HCT116 (cell line): ENCODE measurements at regions of chr11 and their contacts with region 1.

Region 1: DNA sequence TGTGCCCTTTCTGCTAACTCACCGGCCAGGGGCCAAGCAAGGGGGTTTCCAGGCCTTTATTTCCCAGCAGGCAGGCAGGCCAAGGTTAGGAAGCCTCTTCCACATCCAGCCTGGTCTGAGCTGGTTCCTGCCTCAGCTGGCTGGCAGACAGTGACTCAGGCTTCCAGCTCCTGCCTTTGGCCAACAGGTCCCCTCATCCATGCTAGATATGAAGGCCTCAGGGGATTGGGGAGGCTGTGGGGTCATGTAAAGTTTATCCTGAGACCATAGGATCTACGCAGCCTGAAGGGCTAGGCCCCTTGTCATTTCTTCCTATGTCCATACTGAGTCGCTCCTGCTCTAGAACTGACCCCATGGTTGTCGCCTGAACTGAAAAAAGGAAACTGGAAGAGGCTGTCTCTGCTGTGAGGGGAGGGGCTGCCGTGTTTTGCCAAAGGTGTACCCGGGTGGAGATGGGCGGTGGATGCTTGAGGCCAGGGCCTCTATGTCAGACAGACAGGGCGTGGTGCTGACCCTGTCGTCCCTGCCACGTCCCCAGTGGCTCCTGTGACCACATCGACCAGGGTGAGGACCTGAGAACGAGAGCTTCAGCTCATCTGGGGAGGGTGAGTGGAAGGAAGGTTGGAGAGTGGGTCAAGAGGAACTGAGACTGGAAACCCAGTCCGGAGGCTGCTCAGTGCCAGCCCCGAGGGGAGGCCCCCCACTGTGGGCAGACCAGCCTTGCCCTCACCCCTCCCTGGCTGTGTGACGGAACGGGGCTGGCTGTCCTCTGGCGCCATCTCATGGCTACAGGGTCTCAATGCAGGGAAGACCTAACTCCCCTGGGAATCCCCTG is 17.0 kb downstream of the P2RY6 start:
- DNase-seq: peak; percentile 53
- ATAC-seq: peak; percentile 92
- H3K4me3 ChIP-seq: peak overlapping the region in 1 of 2 experiments; percentile 2; a peak in 1 of 4 replicates
- H3K27ac ChIP-seq: no peak overlapping the region; the same call in 1 of the 2 replicates
- H3K4me1 ChIP-seq: peaks cover 4 to 11% of the 10 kb centered on the region in 2 experiments; a peak in 2 of 4 replicates
- H3K27me3 ChIP-seq: no peaks in the 10 kb centered on the region; the same call in 1 of the 2 replicates
- CTCF ChIP-seq: peak; percentile 88 to 97 (median 95)
- POLR2A ChIP-seq: no peak
- RAD21 ChIP-seq: peak; percentile 98

Region 2: DNA sequence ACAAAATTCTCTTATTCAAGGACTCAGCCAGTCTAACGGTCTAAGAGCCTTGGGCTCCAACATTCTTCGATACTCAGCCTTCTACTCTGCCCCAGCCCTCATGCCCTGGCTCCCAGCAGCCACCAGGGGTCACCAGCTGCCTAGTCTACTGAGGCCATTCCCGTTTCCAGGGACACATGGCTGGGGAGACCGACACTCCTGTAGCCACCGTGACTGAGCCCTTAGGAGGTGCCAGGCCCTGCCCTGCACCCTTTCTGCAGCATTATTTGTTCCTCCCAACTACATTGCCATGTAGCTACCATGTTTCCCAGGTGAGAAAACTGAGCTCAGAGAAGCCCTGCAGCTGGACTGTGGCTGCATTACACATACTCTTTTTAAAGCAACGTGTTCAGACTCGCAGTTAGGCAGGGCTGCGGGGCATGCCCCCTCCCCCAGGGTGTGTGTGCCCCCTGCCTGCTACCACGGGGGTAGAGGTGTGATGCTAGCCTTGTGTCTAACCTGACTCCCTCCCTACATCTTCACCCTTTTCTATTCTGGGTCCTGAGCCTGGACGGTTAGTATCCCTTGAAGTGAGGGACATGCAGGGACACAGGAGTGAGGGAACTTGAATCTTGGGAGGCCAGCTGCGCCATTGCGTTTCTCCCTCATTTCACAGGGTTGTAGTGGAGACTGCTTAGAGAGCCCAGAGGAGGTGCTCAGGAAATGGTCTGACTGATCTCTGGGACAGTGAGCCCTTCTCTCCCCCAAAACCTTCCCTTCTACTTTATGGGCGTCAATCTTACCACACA is 457.4 kb before region 1 on chr11:
- CTCF ChIA-PET with region 1: interaction called, 9 read pairs
- POLR2A ChIA-PET with region 1: no interaction called
- RAD21 ChIA-PET with region 1: no interaction called
- intact Hi-C with region 1: loop called (anchors 1 kb)
- DNase-seq: peak; percentile 54
- ATAC-seq: peak; percentile 98
- H3K4me3 ChIP-seq: no peak overlapping the region
- H3K27ac ChIP-seq: no peak overlapping the region
- H3K4me1 ChIP-seq: peaks cover 0 to 6% of the 10 kb centered on the region in 2 experiments; a peak in 2 of 4 replicates
- H3K27me3 ChIP-seq: no peaks in the 10 kb centered on the region
- CTCF ChIP-seq: peak; percentile 91 to 97 (median 93)
- POLR2A ChIP-seq: no peak
- RAD21 ChIP-seq: peak; percentile 95

Region 3: GRCh38 chr11:73184953-73185671 is 104.0 kb before region 1 on chr11:
- CTCF ChIA-PET with region 1: interaction called, 15 read pairs
- POLR2A ChIA-PET with region 1: interaction called, 6 read pairs
- RAD21 ChIA-PET with region 1: no interaction called
- intact Hi-C with region 1: loop called (anchors 1 kb)
- DNase-seq: peak; percentile 40
- ATAC-seq: peak; percentile 96
- H3K4me3 ChIP-seq: peak overlapping the region in 1 of 2 experiments; percentile 15; a peak in 1 of 4 replicates
- H3K27ac ChIP-seq: no peak overlapping the region
- H3K4me1 ChIP-seq: peaks cover 2 to 24% of the 10 kb centered on the region in 2 experiments; a peak in 3 of 4 replicates
- H3K27me3 ChIP-seq: no peaks in the 10 kb centered on the region
- CTCF ChIP-seq: peak; percentile 95 to 99 (median 96)
- POLR2A ChIP-seq: no peak
- RAD21 ChIP-seq: peak; percentile 95

Region 4: DNA sequence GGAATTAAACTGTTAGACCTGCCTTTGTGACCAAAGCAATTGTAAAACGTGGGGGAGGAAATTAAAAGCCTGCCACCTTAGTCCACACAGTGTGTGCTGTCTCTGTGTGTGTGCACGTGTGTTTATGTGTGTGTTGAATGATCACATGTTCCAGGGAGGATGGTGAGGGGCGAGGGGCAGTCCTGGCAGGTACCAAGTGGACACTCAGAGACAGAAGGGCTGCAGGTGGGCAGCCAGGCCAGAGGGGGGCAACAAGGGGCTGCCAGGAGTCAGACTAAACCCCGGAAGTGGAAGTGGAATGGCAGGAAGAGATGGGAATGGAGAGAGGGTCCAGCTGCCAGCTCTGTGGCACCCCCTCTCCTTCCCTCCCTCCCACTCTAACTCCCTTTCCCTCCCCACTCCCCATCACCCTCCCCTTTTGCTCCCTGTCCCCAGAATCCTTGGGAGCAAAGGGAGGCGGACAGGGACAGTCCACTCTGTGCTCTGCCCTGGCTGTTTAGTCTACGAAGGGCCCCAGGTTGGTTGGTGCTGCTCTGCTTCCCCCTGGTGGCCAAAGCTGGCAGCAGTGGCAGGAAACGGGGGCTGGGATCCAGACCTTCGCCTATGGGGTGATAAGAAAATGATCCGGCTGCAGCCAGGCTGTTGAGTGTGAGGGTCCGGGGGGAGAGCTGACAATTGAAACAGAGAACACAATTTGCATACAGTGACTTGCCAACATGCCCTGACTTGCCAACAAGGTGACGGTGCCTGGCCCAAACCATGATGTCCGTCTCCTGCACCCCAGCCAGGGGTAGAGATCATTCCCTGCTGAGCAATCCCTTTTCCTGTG is 46.6 kb before region 1 on chr11:
- CTCF ChIA-PET with region 1: interaction called, 10 read pairs
- POLR2A ChIA-PET with region 1: no interaction called
- RAD21 ChIA-PET with region 1: interaction called in 1 of 2 experiments, 3 read pairs
- intact Hi-C with region 1: loop called (anchors 1 kb)
- DNase-seq: peak; percentile 65
- ATAC-seq: peak; percentile 93
- H3K4me3 ChIP-seq: peak overlapping the region; percentile 42 to 48
- H3K27ac ChIP-seq: no peak overlapping the region
- H3K4me1 ChIP-seq: peaks cover 0 to 26% of the 10 kb centered on the region in 2 experiments; a peak in 1 of 4 replicates
- H3K27me3 ChIP-seq: no peaks in the 10 kb centered on the region
- CTCF ChIP-seq: peak; percentile 96 to 98 (median 97)
- POLR2A ChIP-seq: no peak
- RAD21 ChIP-seq: peak; percentile 93